Mucosa of descending colon (tissue), 3 donors: ENCODE measurements at regions of chr5 and their contacts with region 1.

Region 1: GRCh38 chr5:35089334-35090314 is 41.9 kb upstream of the AGXT2 start:
- DNase-seq: peak in 1 of 3 donors; percentile 91
- ATAC-seq: peak; percentile 77
- H3K4me3 ChIP-seq: no peak overlapping the region
- H3K4me1 ChIP-seq: peaks cover 10% of the 10 kb centered on the region
- CTCF ChIP-seq: peak; percentile 36

Region 2: DNA sequence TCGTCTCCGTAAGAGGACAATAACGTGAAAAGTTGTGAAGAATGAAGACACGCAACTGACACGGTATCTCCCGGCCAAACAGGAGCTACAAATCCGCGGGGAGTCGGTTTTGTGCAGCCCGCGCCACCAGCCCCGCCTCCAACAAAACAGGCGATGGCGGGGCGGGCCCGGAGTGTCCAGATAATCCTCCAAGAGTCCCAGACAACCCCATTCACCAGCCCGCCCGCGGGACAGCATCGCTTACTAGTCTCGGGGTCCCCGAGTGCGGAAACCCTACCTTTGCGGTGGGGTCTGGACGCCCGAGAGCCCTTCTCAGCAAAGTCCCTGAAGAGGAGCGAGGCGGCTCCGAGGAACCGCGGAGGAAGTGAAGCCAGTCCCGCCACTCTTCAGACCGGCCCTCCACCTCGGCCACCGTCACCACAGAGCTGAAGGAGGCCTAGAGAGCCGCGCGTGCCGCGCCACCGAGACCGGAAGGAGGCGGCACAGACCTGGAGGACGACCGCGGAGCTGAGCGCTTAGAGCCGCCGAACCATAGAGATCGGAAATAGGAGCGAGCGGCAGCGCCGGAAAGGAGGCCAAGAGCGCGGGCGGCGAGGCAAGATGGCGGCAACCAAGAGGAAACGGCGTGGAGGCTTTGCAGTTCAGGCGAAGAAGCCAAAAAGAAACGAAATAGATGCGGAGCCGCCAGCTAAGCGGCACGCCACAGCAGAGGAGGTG is 174.3 kb before region 1 on chr5 and contains the starts of genes BRIX1 and RAD1:
- intact Hi-C with region 1: no loop called
- DNase-seq: peak; percentile 96 to 98 (median 97)
- ATAC-seq: peak; percentile 100
- H3K4me3 ChIP-seq: peak within 1 kb of the TSS; percentile 91
- H3K4me1 ChIP-seq: peaks cover 23% of the 10 kb centered on the region
- CTCF ChIP-seq: no peak
- total RNA-seq, gene BRIX1: 10.7 to 19.2 (median 18.2) TPM
- total RNA-seq, gene RAD1: 12.0 to 14.7 (median 13.8) TPM

Region 3: DNA sequence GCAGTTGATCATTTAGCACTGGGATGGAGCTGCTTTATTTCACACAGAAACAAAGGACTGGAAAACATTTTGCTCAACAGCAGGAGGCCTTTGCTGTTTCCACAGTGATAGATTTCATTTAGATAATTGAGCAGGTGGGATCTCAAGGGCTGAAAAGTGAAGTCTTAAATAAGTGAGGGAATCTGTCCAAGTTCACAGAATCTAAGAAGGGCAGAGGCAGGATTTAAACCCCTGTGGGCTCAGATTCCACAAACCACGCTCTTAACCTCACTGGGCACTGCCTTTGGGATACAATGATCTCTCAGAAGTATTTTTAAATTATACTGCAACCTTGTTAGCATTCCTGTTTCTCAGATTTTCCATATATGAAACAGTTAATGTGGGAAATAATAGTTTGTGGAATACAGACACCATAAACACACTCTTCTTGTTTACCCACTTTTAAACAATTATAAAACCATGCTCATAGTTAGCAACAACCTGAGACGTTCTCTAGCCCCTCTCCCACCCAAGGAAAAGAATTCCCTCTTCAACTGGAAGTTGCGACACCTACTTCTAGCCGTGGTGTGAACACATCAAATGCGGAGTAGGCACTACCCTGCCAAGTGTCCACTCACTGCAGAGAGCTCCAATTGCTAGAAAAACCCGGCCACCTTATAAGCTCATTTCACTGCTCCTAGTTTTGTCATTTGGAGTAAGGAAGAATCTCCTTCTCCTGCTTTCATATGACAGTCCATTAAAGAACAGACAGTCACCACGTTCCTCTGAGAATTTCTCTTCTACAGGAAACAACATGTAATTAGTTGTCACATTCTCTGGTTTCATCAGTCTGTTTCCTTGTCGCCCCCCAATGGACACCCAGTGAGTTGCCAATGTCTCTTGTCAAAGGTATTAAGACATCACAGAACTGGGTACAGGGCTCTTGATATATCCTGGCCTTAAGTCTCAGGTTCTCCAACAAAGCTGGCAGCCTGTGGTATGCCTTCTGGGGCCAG is 93.2 kb after region 1 on chr5:
- intact Hi-C with region 1: loop called in 1 of 2 experiments (anchors 10 kb)
- DNase-seq: peak in 2 of 3 donors; percentile 51 to 72
- ATAC-seq: peak; percentile 39
- H3K4me3 ChIP-seq: no peak overlapping the region
- H3K4me1 ChIP-seq: peaks cover 21% of the 10 kb centered on the region
- CTCF ChIP-seq: no peak

Region 4: DNA sequence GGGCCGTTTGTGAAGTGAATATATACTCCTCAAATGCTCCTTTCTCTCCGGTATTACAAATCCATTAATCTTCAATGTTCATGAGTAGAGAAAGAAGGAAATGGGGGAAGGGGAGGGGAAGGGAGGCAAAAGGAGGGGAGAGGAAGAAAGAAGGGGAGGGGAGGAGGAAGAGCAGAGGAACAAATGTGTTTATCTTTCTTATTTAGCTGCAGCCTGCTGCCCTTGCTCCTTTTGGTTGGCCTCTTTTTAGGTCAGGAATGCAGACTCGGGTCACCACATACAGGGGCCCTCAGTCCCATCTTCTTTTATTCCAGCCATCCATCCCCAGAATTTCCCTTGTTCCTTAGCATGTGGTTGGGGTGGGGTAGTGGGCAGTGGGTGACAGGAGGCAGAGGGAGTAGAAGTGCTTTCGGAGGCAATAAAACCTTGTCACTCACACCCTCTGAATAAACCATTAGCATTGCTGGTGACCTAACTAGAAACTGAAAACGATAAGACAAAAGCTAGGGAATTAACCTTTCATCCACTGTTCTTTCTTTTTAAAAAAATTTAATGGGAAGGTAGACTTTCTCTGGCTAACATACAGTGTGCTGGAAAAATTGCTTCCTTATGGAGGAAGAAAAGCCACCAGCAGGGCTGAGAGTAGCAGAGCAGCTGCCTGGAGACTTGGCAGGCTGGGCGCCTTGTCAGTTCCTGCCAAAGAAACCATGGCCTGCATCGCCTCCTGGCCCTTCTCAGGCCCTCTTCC is 157.4 kb after region 1 on chr5:
- intact Hi-C with region 1: loop called in 1 of 2 experiments (anchors 5 kb)
- DNase-seq: peak; percentile 61 to 72 (median 65)
- ATAC-seq: peak; percentile 85
- H3K4me3 ChIP-seq: no peak overlapping the region
- H3K4me1 ChIP-seq: no peaks in the 10 kb centered on the region
- CTCF ChIP-seq: no peak

Region 5: GRCh38 chr5:35926389-35927051 is 836.9 kb after region 1 on chr5:
- intact Hi-C with region 1: loop called in 1 of 2 experiments (anchors 10 kb)
- DNase-seq: peak in 1 of 3 donors; percentile 77
- ATAC-seq: peak; percentile 68
- H3K4me3 ChIP-seq: no peak overlapping the region
- H3K4me1 ChIP-seq: no peaks in the 10 kb centered on the region
- CTCF ChIP-seq: peak; percentile 45